Activated B cell treated with CpG ODN at 0.5 μM for 24 hours (primary cell): ENCODE measurements at regions of chr2 and their contacts with region 1.

Region 1: GRCh38 chr2:231399853-231400680 is 4.6 kb downstream of the B3GNT7 start:
- DNase-seq: no peak
- ATAC-seq: no peak
- H3K4me3 Mint-ChIP-seq: no peak overlapping the region
- H3K27ac Mint-ChIP-seq: no peak overlapping the region
- H3K4me1 Mint-ChIP-seq: peaks cover 27% of the 10 kb centered on the region
- H3K27me3 Mint-ChIP-seq: no peaks in the 10 kb centered on the region
- CTCF ChIP-seq: no peak

Region 2: GRCh38 chr2:231245253-231246094 is 154.6 kb before region 1 on chr2:
- CTCF ChIA-PET with region 1: interaction called, 3 read pairs
- POLR2A ChIA-PET with region 1: no interaction called
- intact Hi-C with region 1: loop called (anchors 1 kb)
- DNase-seq: no peak
- ATAC-seq: peak; percentile 62
- H3K4me3 Mint-ChIP-seq: no peak overlapping the region
- H3K27ac Mint-ChIP-seq: no peak overlapping the region
- H3K4me1 Mint-ChIP-seq: no peaks in the 10 kb centered on the region
- H3K27me3 Mint-ChIP-seq: no peaks in the 10 kb centered on the region
- CTCF ChIP-seq: no peak

Region 3: GRCh38 chr2:231411831-231412617 is 12.0 kb after region 1 on chr2:
- CTCF ChIA-PET with region 1: interaction called, 11 read pairs
- POLR2A ChIA-PET with region 1: interaction called, 9 read pairs
- intact Hi-C with region 1: loop called (anchors 2 kb)
- DNase-seq: peak; percentile 86
- ATAC-seq: peak; percentile 100
- H3K4me3 Mint-ChIP-seq: peak overlapping the region; percentile 56
- H3K27ac Mint-ChIP-seq: no peak overlapping the region
- H3K4me1 Mint-ChIP-seq: peaks cover 9% of the 10 kb centered on the region
- H3K27me3 Mint-ChIP-seq: peaks cover 13% of the 10 kb centered on the region
- CTCF ChIP-seq: no peak

Region 4: DNA sequence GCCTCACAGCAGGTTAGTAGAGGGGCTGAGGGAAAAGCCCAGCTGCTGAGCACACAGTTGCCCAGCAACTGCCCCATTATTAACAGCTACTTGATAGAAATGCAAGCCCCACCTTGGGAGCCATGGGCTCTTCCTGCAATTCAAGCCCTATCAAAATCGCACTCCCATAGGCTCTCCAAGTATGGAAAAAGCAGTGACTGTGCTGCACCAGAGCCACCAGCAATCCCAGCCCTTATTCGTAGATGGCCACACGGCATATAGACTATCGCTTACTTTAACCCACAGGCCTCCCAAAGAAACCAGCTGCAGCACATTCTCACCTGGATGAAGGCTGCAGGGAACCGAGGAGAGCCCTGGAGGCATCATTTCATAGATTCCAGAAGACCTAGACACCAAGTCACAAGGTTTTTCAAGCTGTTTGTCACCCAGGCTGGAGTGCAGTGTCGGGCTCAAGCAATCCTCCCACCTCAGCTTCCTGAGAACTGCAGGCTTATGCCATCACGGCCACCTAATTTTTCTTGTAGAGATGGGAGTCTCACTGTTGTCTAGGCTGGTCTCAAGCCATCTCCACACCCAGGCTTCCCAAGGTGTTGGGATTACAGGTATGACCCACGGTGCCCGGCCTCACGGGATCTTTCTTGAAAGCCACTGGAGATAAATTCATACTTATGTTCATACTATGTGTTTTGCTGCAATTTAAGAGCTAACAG is 52.9 kb after region 1 on chr2:
- CTCF ChIA-PET with region 1: interaction called, 5 read pairs
- POLR2A ChIA-PET with region 1: interaction called, 3 read pairs
- intact Hi-C with region 1: loop called (anchors 1 kb)
- DNase-seq: no peak
- ATAC-seq: no peak
- H3K4me3 Mint-ChIP-seq: no peak overlapping the region
- H3K27ac Mint-ChIP-seq: no peak overlapping the region
- H3K4me1 Mint-ChIP-seq: peaks cover 7% of the 10 kb centered on the region
- H3K27me3 Mint-ChIP-seq: no peaks in the 10 kb centered on the region
- CTCF ChIP-seq: no peak

Region 5: GRCh38 chr2:231503766-231504165 is 103.7 kb after region 1 on chr2:
- CTCF ChIA-PET with region 1: no interaction called
- POLR2A ChIA-PET with region 1: no interaction called
- intact Hi-C with region 1: no loop called
- DNase-seq: no peak
- ATAC-seq: no peak
- H3K4me3 Mint-ChIP-seq: no peak overlapping the region
- H3K27ac Mint-ChIP-seq: no peak overlapping the region
- H3K4me1 Mint-ChIP-seq: no peaks in the 10 kb centered on the region
- H3K27me3 Mint-ChIP-seq: no peaks in the 10 kb centered on the region
- CTCF ChIP-seq: no peak